ENCODE measurements at regions of chr2 and their contacts with region 1.

Region 1: DNA sequence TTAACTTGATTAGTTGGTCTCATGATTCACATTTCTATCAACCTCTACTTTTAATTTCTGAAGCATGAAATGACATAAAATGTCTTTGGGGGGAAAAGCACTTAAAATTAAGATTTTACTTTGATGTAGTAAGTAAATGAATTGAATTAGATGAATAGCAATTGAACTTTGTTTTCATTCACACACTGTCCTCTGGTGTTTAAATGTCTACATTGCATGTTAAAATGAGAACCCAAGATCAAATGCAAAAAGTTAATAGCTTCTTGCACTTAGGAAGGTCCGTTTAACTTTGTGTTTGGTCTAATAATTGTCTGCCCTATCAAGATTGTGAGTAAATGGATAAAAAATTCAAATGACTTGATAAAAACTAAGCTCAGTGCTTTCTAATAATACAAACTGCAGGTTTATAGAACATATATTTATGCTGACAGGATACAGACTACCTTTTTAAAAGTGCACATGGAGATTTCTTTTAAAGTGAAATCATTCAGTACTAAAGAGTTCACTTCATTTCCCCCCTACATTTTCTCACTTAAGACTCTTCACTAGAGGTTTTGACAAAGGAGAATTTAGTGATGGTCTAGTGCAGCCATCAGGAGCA is 156.2 kb upstream of the NABP1 start:
- DNase-seq: no peak
- ATAC-seq: no peak
- H3K4me3 ChIP-seq: no peak overlapping the region
- H3K27ac ChIP-seq: no peak overlapping the region
- H3K4me1 ChIP-seq: no peaks in the 10 kb centered on the region
- H3K27me3 ChIP-seq: no peaks in the 10 kb centered on the region
- CTCF ChIP-seq: peak; percentile 82

Region 2: GRCh38 chr2:191051825-191052778 is 469.6 kb before region 1 on chr2:
- intact Hi-C with region 1: loop called (anchors 10 kb)
- DNase-seq: no peak
- ATAC-seq: peak; percentile 83
- H3K4me3 ChIP-seq: no peak overlapping the region
- H3K27ac ChIP-seq: no peak overlapping the region
- H3K4me1 ChIP-seq: peaks cover 12% of the 10 kb centered on the region
- H3K27me3 ChIP-seq: no peaks in the 10 kb centered on the region
- CTCF ChIP-seq: peak; percentile 61

Region 3: DNA sequence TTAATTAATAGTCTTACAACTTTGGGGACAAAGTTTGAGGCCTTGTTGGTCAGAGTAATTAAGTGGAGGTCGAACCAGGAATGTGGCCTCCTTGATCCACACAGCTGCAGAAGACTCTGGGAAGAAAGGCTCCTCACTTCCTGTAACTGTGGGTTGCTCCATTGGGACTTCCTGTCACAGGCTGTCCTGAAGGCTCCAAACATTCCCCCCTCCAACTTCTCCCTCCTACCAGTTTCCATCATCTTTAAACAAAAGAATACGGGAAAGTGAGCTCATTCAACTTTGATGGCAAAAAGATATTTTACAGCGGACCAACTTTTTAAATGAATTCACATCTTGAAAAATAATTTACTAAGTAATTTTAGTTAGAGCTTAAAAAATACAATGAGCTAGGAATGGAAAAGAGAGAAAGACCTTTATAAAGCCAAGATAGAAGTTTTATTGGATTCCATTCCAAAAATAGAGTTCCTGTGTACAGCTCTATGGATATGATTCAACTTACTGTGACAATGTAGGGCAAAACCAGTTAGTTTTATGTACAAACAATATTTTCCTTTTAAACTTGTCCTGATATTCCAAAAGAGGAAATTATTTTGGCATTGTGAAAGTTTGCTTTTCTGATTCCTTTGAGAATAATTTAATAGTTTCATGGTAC is 55.8 kb before region 1 on chr2:
- intact Hi-C with region 1: no loop called
- DNase-seq: no peak
- ATAC-seq: no peak
- H3K4me3 ChIP-seq: no peak overlapping the region
- H3K27ac ChIP-seq: peak overlapping the region; percentile 9
- H3K4me1 ChIP-seq: no peaks in the 10 kb centered on the region
- H3K27me3 ChIP-seq: no peaks in the 10 kb centered on the region
- CTCF ChIP-seq: no peak